ENCODE measurements at regions of chr4 and their contacts with region 1.

Region 1: GRCh38 chr4:176277162-176277904 is 8.3 kb upstream of the ASB5 start:
- DNase-seq: no peak
- ATAC-seq: peak; percentile 91
- H3K4me3 ChIP-seq: no peak overlapping the region
- H3K27ac ChIP-seq: no peak overlapping the region
- H3K4me1 ChIP-seq: no peaks in the 10 kb centered on the region
- H3K27me3 ChIP-seq: peaks cover under 1 to 3% of the 10 kb centered on the region in 2 experiments; a peak in 3 of 4 replicates
- CTCF ChIP-seq: peak; percentile 37 to 43 (median 38); a peak in 5 of 6 replicates
- EP300 ChIP-seq: no peak
- POLR2A ChIP-seq: no peak
- RAD21 ChIP-seq: peak; percentile 60

Region 2: DNA sequence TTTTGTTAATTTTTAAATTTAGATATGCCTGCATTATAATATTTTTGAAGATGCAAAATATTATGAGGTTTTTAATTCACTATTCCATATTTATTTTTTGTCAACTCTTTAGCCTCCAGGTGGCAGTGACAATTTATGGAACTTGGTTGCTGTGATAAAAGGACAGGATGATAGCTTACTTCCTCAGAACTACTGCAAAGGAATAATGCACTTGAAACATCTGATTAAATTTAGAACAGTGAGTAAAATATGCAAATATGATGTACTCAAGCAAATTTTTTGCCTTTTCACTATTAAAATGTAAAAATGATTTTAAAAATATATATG is 127.0 kb before region 1 on chr4:
- CTCF ChIA-PET with region 1: no interaction called
- POLR2A ChIA-PET with region 1: no interaction called
- RAD21 ChIA-PET with region 1: no interaction called
- SMC1A ChIA-PET with region 1: interaction called, 7 read pairs
- in situ Hi-C with region 1: no loop called
- intact Hi-C with region 1: loop called (anchors 5 kb)
- DNase-seq: no peak
- ATAC-seq: no peak
- H3K4me3 ChIP-seq: no peak overlapping the region
- H3K27ac ChIP-seq: no peak overlapping the region
- H3K4me1 ChIP-seq: no peaks in the 10 kb centered on the region
- H3K27me3 ChIP-seq: no peaks in the 10 kb centered on the region
- CTCF ChIP-seq: peak in 1 of 3 experiments; percentile 30; a peak in 1 of 6 replicates
- EP300 ChIP-seq: no peak
- POLR2A ChIP-seq: no peak
- RAD21 ChIP-seq: peak; percentile 56

Region 3: GRCh38 chr4:176383273-176384077 is 106.1 kb after region 1 on chr4:
- CTCF ChIA-PET with region 1: no interaction called
- POLR2A ChIA-PET with region 1: no interaction called
- RAD21 ChIA-PET with region 1: no interaction called
- SMC1A ChIA-PET with region 1: no interaction called
- in situ Hi-C with region 1: no loop called
- intact Hi-C with region 1: no loop called
- DNase-seq: no peak
- ATAC-seq: no peak
- H3K4me3 ChIP-seq: no peak overlapping the region
- H3K27ac ChIP-seq: no peak overlapping the region
- H3K4me1 ChIP-seq: no peaks in the 10 kb centered on the region
- H3K27me3 ChIP-seq: no peaks in the 10 kb centered on the region
- CTCF ChIP-seq: no peak
- EP300 ChIP-seq: no peak
- POLR2A ChIP-seq: no peak
- RAD21 ChIP-seq: no peak

Region 4: GRCh38 chr4:176653401-176654220 is 376.3 kb after region 1 on chr4:
- CTCF ChIA-PET with region 1: no interaction called
- POLR2A ChIA-PET with region 1: no interaction called
- RAD21 ChIA-PET with region 1: no interaction called
- SMC1A ChIA-PET with region 1: no interaction called
- in situ Hi-C with region 1: no loop called
- intact Hi-C with region 1: no loop called
- DNase-seq: no peak
- ATAC-seq: no peak
- H3K4me3 ChIP-seq: no peak overlapping the region
- H3K27ac ChIP-seq: no peak overlapping the region
- H3K4me1 ChIP-seq: no peaks in the 10 kb centered on the region
- H3K27me3 ChIP-seq: no peaks in the 10 kb centered on the region
- CTCF ChIP-seq: no peak
- EP300 ChIP-seq: no peak
- POLR2A ChIP-seq: no peak
- RAD21 ChIP-seq: no peak